ENCODE measurements at regions of chr3 and their contacts with region 1.

Region 1: DNA sequence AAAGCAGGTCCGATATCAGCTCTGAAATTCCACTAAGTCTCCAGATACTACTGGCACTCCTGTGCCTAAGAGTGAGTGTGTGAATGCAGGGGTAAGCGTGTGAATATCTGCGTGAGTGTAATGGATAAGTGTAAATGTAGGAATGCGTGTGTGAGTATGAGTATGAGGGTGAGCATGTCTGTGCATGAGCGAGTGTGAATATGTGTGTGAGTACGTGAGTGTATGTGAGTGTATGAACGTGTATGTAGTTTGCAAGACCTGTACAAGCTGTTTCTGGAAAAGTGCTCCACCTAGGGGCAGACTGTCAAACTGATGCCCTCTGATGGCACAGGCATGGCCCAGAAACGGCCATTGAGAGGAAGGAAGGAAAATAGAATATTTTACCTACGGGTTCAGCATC is 24.4 kb upstream of the FRMD4B start:
- DNase-seq: peak; percentile 38 to 74 (median 45)
- ATAC-seq: peak; percentile 75
- H3K4me3 ChIP-seq: no peak overlapping the region
- H3K4me3 Mint-ChIP-seq: no peak overlapping the region
- H3K27ac ChIP-seq: no peak overlapping the region
- H3K27ac Mint-ChIP-seq: no peak overlapping the region
- H3K4me1 ChIP-seq: no peaks in the 10 kb centered on the region
- H3K4me1 Mint-ChIP-seq: peaks cover 4% of the 10 kb centered on the region
- H3K27me3 ChIP-seq: no peaks in the 10 kb centered on the region
- H3K27me3 Mint-ChIP-seq: peaks cover 3% of the 10 kb centered on the region
- CTCF ChIP-seq: peak; percentile 67

Region 2: DNA sequence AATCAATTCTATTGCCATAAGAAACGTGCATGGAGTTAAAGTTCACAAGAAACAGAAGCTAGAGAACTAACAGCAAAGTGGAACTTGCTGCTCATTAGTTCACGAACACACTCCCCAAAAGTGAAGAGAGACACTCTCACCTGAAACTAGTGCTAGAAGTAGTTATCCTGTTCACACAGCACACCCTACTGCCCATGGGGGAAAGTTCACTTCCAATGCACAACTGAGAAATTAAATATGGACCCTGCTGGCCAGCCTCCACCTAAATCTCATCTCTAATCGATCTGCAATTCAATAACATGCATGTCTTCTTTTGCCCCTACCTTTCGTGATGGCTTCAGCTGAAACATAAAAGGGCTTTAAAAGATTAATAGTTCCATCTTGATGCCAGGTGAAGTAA is 15.0 kb after region 1 on chr3:
- CTCF ChIA-PET with region 1: interaction called, 12 read pairs
- POLR2A ChIA-PET with region 1: no interaction called
- intact Hi-C with region 1: no loop called
- DNase-seq: peak in 3 of 9 experiments; percentile 12 to 45 (median 37)
- ATAC-seq: no peak
- H3K4me3 ChIP-seq: no peak overlapping the region
- H3K4me3 Mint-ChIP-seq: no peak overlapping the region
- H3K27ac ChIP-seq: no peak overlapping the region
- H3K27ac Mint-ChIP-seq: no peak overlapping the region
- H3K4me1 ChIP-seq: no peaks in the 10 kb centered on the region
- H3K4me1 Mint-ChIP-seq: no peaks in the 10 kb centered on the region
- H3K27me3 ChIP-seq: no peaks in the 10 kb centered on the region
- H3K27me3 Mint-ChIP-seq: peaks cover 3% of the 10 kb centered on the region
- CTCF ChIP-seq: peak; percentile 38